Panc1 (cell line): ENCODE measurements at regions of chr11 and their contacts with region 1.

Region 1: DNA sequence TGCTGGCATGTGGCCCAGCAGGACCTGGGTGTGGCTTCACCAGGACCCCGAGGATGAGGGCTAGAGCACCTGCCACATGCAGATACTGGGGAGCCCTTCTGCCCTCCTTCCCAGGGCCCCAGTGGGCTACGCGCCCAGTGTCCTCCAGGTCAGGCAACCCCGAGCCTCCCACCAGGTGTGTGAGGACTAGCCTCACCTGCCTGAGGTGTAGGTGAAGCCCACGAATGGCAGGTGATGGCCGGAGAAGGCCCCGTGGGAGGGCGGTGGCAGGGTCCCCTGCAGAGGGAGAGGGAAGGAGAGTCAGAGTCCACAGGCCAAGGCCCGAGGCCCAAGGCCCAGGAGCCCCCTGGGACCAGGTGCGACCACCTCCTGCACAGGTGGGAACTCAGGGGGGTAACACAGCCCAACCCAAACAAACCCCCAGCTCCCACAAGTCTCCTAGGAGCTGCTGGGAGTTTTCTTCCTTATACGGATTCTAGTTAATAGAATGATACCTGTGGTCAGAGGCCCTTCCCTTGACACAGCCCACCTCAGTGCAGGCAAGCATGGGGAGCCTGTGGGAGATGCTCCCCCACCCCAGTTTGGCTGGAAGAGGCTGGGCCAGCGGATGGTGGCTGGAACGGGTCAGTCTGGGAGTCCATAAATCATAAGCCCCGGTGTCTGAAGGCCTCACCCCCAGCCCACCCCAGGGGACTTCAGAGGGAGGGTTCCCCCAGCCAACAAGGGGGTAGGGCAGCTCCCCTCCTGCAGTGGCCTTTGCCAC is 6.4 kb downstream of the CDC42BPG start:
- DNase-seq: no peak
- ATAC-seq: no peak
- H3K4me3 ChIP-seq: no peak overlapping the region
- H3K27ac ChIP-seq: no peak overlapping the region
- H3K4me1 ChIP-seq: peaks cover 29% of the 10 kb centered on the region
- H3K27me3 ChIP-seq: no peaks in the 10 kb centered on the region
- CTCF ChIP-seq: no peak

Region 2: GRCh38 chr11:64868904-64869570 is 31.0 kb after region 1 on chr11:
- CTCF ChIA-PET with region 1: no interaction called
- POLR2A ChIA-PET with region 1: interaction called, 19 read pairs
- in situ Hi-C with region 1: no loop called
- intact Hi-C with region 1: no loop called
- DNase-seq: no peak
- ATAC-seq: peak; percentile 70
- H3K4me3 ChIP-seq: peak overlapping the region in 1 of 2 experiments; percentile 12; a peak in 2 of 4 replicates
- H3K27ac ChIP-seq: peak overlapping the region; percentile 83
- H3K4me1 ChIP-seq: peaks cover 84% of the 10 kb centered on the region
- H3K27me3 ChIP-seq: no peaks in the 10 kb centered on the region
- CTCF ChIP-seq: no peak